Posterior vena cava (tissue), 2 donors: ENCODE measurements at regions of chr7 and their contacts with region 1.

Region 1: GRCh38 chr7:50047716-50048115 is 45.3 kb downstream of the ZPBP start:
- DNase-seq: no peak

Region 2: DNA sequence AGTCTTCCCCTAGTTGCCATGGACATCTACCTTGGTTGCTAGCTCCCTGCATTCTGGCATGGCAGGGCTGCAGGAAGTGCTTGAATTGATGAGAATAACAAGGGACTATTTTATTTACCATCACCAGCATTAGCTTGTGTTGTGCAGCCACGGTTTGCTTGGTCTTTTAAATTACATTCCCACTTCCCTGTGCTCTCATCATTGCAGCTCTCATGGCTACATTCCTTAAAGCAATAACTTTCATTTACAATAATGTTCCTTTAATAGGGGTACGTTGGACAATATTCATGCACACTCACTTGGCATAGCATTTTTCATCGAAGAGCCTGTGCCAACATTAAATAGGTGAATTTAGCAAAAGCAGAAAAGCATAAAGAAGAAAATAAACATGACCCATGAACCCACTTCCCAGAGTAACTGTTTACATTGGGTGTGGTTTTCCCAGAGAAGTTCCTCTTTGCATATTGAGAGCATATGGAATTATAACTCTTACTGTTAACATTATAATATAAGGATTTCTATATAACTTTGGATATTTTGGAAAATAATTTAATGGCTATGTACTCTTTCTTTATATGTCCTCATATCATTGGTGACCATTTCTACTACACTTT is 387.4 kb before region 1 on chr7:
- intact Hi-C with region 1: loop called in 1 of 2 experiments (anchors 10 kb)
- DNase-seq: no peak